MCF 10A (cell line): ENCODE measurements at regions of chr12 and their contacts with region 1.

Region 1: GRCh38 chr12:106223485-106224354 is 24.1 kb downstream of the CKAP4 start:
- DNase-seq: peak; percentile 69
- H3K4me3 Mint-ChIP-seq: no peak overlapping the region
- H3K27ac Mint-ChIP-seq: no peak overlapping the region
- H3K4me1 Mint-ChIP-seq: peaks cover 15% of the 10 kb centered on the region
- H3K27me3 Mint-ChIP-seq: no peaks in the 10 kb centered on the region
- CTCF ChIP-seq: peak; percentile 93

Region 2: GRCh38 chr12:105420659-105421240 is 803.0 kb before region 1 on chr12:
- CTCF ChIA-PET with region 1: interaction called, 23 read pairs
- POLR2A ChIA-PET with region 1: no interaction called
- intact Hi-C with region 1: loop called (anchors 1 kb)
- DNase-seq: peak; percentile 74
- H3K4me3 Mint-ChIP-seq: no peak overlapping the region
- H3K27ac Mint-ChIP-seq: no peak overlapping the region
- H3K4me1 Mint-ChIP-seq: peaks cover 40% of the 10 kb centered on the region
- H3K27me3 Mint-ChIP-seq: no peaks in the 10 kb centered on the region
- CTCF ChIP-seq: peak; percentile 86

Region 3: DNA sequence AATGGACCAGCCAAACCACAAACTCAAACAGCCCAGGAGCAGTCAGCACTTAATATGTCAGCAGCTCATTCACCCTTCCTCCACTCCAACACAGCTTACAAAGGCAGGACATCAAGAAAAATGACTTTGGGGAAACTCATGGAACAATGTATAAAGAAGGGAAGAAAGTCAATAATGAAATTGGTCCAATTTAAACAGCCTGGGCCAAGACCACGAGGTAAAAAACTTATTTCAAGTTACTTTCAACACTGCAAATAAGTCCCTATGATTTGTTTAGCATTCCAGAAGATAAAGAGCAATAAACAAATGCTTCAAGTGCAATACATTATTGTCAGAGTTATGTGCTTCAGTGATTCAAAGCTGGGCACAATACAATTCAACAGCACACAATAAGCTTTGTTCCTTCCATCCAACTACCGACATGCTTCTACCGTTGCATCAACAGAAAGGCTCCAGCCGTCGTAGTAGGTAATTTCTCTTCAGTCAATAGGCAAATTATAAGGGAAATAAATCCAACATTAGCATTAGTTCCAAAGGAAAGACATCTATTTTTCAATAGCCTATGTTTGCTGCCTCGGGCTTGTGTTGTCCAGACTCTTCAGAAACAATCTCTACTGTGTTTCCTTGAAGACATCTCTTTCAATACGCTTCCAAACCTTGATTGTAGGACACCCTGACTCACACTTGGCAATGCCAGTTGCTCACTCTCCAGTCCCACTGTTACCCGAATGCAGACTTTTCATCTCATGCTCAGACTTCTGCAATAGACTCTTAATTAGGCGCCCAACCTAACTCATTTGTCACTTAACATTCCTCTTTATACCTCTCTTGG is 310.6 kb before region 1 on chr12:
- CTCF ChIA-PET with region 1: no interaction called
- POLR2A ChIA-PET with region 1: no interaction called
- intact Hi-C with region 1: no loop called
- DNase-seq: no peak
- H3K4me3 Mint-ChIP-seq: no peak overlapping the region
- H3K27ac Mint-ChIP-seq: no peak overlapping the region
- H3K4me1 Mint-ChIP-seq: no peaks in the 10 kb centered on the region
- H3K27me3 Mint-ChIP-seq: no peaks in the 10 kb centered on the region
- CTCF ChIP-seq: no peak

Region 4: DNA sequence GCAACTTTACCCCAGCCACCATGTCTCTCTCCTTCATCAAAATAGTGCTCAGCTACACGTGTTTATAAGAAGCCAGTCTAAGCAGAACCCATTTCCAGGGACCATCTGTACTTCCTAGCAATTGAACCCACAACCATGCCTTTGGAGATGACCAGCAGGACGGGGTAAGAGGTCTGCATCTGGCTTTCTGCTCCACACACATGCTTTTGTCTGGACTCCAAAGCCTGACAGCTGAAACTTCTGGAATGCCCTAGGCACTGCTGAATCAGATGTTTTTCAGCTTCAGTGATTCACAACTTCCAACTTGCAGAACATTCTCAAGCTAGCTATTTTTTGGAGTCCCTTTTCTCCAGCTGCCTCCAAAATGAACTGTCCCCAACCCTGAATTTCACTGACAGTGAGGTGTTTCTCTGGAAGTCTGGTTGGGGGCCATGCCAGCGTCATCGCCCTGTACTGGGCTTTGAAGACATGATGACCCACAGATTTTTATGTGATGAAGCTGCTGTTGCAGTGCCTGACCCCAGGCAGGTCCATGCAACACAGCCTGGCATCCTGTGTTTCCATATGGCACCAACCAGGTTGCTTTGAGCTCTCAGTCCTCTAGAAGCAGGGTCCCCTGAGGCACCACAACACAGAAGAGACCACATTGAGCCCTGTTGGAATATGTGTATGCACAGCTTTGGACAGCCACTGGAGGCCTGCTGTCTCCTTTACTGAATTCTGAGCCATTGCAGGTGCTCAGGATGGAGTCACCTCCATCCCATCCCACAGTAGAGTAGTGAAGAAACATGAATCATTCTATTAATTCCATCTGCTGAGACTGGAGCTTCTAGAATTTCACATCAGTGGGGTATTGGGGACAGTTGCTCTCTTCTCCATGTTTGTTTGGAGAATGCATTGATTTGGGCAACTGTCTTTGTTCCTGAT is 165.2 kb before region 1 on chr12:
- CTCF ChIA-PET with region 1: no interaction called
- POLR2A ChIA-PET with region 1: no interaction called
- intact Hi-C with region 1: no loop called
- DNase-seq: no peak
- H3K4me3 Mint-ChIP-seq: no peak overlapping the region
- H3K27ac Mint-ChIP-seq: no peak overlapping the region
- H3K4me1 Mint-ChIP-seq: peaks cover 5% of the 10 kb centered on the region
- H3K27me3 Mint-ChIP-seq: no peaks in the 10 kb centered on the region
- CTCF ChIP-seq: no peak

Region 5: DNA sequence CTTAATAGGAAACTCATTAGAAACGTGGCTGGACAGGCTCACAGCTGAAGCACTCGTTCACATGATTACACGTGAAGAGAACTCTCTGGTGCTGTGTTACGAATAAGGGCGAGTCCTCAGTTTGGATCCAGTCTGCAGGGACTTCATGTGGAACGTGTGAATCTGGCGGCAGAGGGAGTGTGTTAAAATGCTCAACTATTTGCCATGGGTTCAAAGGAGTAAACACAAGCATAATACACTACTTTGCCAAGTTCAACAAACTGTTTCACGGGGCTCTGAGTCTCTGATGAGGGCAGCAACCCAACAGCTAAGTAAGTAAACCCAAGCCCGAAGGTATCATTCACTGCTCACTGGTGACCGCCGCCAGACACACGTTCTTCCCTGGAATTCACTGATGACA is 127.3 kb before region 1 on chr12:
- CTCF ChIA-PET with region 1: no interaction called
- POLR2A ChIA-PET with region 1: no interaction called
- intact Hi-C with region 1: no loop called
- DNase-seq: no peak
- H3K4me3 Mint-ChIP-seq: no peak overlapping the region
- H3K27ac Mint-ChIP-seq: no peak overlapping the region
- H3K4me1 Mint-ChIP-seq: peaks cover 3% of the 10 kb centered on the region
- H3K27me3 Mint-ChIP-seq: no peaks in the 10 kb centered on the region
- CTCF ChIP-seq: no peak

Region 6: DNA sequence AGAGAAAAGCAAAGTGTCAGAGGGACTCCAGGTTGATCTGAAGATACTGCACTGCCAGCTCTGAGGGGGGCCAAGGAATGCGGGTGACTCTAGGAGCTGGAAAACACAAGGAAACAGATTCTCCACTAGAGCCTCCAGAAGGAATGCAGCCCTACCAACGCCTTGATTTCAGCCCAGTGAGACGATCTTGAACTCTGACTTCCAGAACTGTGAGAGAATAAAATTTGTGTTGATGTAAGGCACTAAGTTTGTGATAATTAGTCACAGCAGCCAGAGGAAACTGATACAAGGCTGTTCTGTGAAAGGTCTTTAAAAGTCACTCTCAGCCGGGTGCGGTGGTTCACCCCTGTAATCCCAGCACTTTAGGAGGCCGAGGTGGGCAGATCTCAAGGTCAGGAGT is 10.1 kb before region 1 on chr12:
- CTCF ChIA-PET with region 1: interaction called, 18 read pairs
- POLR2A ChIA-PET with region 1: interaction called, 3 read pairs
- intact Hi-C with region 1: no loop called
- DNase-seq: no peak
- H3K4me3 Mint-ChIP-seq: no peak overlapping the region
- H3K27ac Mint-ChIP-seq: no peak overlapping the region
- H3K4me1 Mint-ChIP-seq: no peaks in the 10 kb centered on the region
- H3K27me3 Mint-ChIP-seq: peaks cover 63% of the 10 kb centered on the region
- CTCF ChIP-seq: no peak

Region 7: DNA sequence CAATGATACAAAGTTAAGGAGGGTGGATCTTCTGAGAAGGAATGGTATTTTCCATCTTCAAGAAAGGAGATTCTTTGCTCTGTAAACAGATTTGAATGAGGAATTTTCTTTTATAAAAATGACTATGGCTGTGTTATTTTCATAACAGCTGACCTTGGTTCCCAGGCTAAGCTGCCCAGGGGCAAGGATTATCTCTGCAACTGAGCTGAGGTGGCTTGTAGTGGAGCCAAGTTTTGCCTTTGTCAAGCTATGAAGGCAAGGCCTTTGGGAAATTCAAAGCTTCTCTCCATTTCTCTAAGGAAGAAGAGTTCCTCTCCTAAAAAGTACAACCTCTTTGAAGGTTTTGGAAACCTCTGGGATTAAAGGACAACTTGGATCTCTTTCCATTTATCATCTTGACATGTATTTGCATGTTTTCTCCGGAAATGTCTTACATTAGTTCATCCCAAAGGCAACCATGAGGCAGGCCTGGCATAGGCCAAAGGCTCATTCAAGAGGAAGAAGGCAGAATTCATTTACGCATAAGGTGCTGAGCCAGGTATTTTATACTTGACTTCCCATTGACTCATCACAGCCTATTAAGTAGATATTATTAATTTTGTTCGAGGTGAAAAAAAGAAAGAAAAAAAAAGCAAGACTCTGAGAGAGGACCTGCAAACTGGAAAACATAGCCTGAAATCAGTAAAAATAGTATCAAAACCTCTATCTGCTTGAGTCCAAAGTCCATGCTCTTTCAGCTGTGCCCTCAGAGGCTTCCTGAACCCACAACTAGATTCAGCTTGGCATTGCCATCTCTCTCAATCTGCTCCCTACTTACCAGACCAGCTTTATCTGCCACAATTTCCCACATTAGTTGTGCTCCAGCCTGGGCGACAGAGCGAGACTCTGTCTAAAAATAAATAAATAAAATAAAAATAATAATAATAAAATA is 48.1 kb after region 1 on chr12:
- CTCF ChIA-PET with region 1: interaction called, 18 read pairs
- POLR2A ChIA-PET with region 1: interaction called, 4 read pairs
- intact Hi-C with region 1: no loop called
- DNase-seq: peak; percentile 40
- H3K4me3 Mint-ChIP-seq: no peak overlapping the region
- H3K27ac Mint-ChIP-seq: no peak overlapping the region
- H3K4me1 Mint-ChIP-seq: no peaks in the 10 kb centered on the region
- H3K27me3 Mint-ChIP-seq: no peaks in the 10 kb centered on the region
- CTCF ChIP-seq: no peak

Region 8: GRCh38 chr12:106302401-106303201 is 78.9 kb after region 1 on chr12 and contains the start of gene TCP11L2:
- CTCF ChIA-PET with region 1: interaction called, 13 read pairs
- POLR2A ChIA-PET with region 1: interaction called, 28 read pairs
- intact Hi-C with region 1: no loop called
- DNase-seq: peak; percentile 79
- H3K4me3 Mint-ChIP-seq: peak within 1 kb of the TSS; percentile 89
- H3K27ac Mint-ChIP-seq: peak within 1 kb of the TSS; percentile 100
- H3K4me1 Mint-ChIP-seq: peaks cover 23% of the 10 kb centered on the region
- H3K27me3 Mint-ChIP-seq: no peaks in the 10 kb centered on the region
- CTCF ChIP-seq: no peak
- total RNA-seq, gene TCP11L2: 10.2 and 11.4 TPM in 2 replicates

Region 9: GRCh38 chr12:106357549-106358395 is 134.1 kb after region 1 on chr12 and contains the start of gene POLR3B:
- CTCF ChIA-PET with region 1: interaction called, 51 read pairs
- POLR2A ChIA-PET with region 1: interaction called, 34 read pairs
- intact Hi-C with region 1: no loop called
- DNase-seq: peak; percentile 94
- H3K4me3 Mint-ChIP-seq: peak within 1 kb of the TSS; percentile 86
- H3K27ac Mint-ChIP-seq: peak within 1 kb of the TSS; percentile 94
- H3K4me1 Mint-ChIP-seq: peaks cover 13% of the 10 kb centered on the region
- H3K27me3 Mint-ChIP-seq: no peaks in the 10 kb centered on the region
- CTCF ChIP-seq: peak; percentile 72
- total RNA-seq, gene POLR3B: 11.1 and 15.7 TPM in 2 replicates

Region 10: GRCh38 chr12:106841510-106842302 is 618.0 kb after region 1 on chr12:
- CTCF ChIA-PET with region 1: interaction called, 3 read pairs
- POLR2A ChIA-PET with region 1: no interaction called
- intact Hi-C with region 1: loop called (anchors 10 kb)
- DNase-seq: peak; percentile 58
- H3K4me3 Mint-ChIP-seq: no peak overlapping the region
- H3K27ac Mint-ChIP-seq: no peak overlapping the region
- H3K4me1 Mint-ChIP-seq: no peaks in the 10 kb centered on the region
- H3K27me3 Mint-ChIP-seq: no peaks in the 10 kb centered on the region
- CTCF ChIP-seq: peak; percentile 57